ENCODE measurements at regions of chr18 and their contacts with region 1.

Region 1: DNA sequence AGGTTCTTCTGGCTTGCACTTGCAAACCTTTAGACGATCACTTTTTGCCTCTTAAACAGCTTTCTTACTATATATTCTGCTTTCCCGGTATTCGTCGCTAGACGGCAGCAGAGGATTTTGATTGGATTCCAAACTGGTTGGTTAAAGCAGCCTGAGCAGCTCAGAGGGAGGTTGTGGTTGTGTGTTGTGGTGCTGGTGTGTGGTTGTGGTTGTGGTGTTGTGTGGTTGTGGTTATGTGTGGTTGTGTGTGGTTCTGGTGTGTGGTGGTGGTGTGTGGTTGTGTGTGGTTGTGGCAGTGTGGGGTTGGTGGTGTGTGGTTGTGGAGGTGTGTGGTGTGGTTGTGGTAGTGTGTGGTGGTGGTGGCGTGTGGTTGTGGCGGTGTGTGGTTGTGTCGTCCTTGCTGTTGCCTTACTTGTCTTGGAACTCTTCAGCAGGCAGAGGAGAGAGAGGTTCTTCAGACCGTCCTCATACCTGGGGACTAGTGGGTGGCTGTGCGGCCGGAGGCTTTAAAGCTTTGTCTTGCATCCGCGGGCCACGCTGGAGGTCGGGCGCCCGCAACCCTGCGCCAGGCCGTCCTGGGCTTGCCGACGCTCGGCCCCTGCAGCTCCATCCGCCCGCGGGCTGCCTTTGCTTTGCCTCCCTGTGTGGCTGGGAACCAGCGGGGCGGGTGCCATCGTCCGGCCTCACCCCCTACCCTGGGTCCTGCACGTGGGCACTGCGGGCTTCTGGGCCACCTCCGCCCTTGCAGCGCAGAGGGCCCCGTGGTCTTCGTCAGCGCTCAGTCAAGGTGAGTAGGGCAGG is 190.8 kb downstream of the ARHGAP28 start:
- DNase-seq: peak; percentile 89
- ATAC-seq: peak; percentile 83
- H3K4me3 ChIP-seq: no peak overlapping the region
- H3K27ac ChIP-seq: no peak overlapping the region
- H3K4me1 ChIP-seq: no peaks in the 10 kb centered on the region
- H3K27me3 ChIP-seq: peaks cover 43% of the 10 kb centered on the region
- CTCF ChIP-seq: peak; percentile 94

Region 2: GRCh38 chr18:6521795-6522418 is 398.4 kb before region 1 on chr18:
- CTCF ChIA-PET with region 1: no interaction called
- POLR2A ChIA-PET with region 1: no interaction called
- intact Hi-C with region 1: no loop called
- DNase-seq: peak; percentile 85
- ATAC-seq: peak; percentile 84
- H3K4me3 ChIP-seq: no peak overlapping the region
- H3K27ac ChIP-seq: no peak overlapping the region
- H3K4me1 ChIP-seq: no peaks in the 10 kb centered on the region
- H3K27me3 ChIP-seq: no peaks in the 10 kb centered on the region
- CTCF ChIP-seq: peak; percentile 94

Region 3: DNA sequence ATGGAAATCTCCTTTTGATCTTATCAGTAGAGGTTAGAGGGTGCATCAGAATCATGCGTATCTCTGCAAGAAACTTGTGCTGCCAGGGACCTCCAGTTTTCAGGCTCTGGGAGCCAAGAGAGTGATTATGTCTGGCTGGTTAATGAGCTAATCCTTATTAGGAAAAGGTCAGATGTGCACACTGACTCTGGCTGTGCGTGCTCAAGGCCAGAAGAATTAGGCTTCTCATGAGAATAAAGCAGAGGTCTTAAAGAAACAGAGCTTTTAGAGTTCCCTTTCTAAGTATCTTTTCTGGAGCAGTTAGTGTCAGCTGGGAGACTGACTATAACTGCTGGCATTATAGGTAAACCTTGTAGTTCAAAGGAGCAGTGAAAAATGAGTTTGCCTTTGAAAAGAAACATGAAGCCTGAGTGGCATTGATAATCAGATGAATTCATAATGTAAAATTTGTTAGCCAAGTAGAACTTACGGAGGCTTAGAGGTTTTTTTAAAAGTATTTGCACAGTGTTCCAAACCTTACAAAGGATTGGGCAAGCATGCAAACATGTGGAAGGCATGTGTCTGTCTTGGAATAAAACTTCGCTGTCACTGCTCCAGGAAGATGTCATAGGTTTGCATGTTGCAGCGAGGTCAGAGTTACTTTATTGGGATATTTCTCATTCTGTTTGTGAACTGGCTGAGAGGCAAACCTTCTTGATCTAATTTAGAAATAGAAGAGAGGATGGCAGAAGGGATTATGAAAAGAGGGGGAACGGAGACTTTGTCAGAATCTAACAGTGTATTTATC is 39.1 kb before region 1 on chr18:
- CTCF ChIA-PET with region 1: no interaction called
- POLR2A ChIA-PET with region 1: no interaction called
- intact Hi-C with region 1: no loop called
- DNase-seq: no peak
- ATAC-seq: no peak
- H3K4me3 ChIP-seq: no peak overlapping the region
- H3K27ac ChIP-seq: no peak overlapping the region
- H3K4me1 ChIP-seq: no peaks in the 10 kb centered on the region
- H3K27me3 ChIP-seq: no peaks in the 10 kb centered on the region
- CTCF ChIP-seq: no peak

Region 4: GRCh38 chr18:7000484-7001096 is 80.3 kb after region 1 on chr18:
- CTCF ChIA-PET with region 1: interaction called, 8 read pairs
- POLR2A ChIA-PET with region 1: no interaction called
- intact Hi-C with region 1: loop called (anchors 1 kb)
- DNase-seq: peak; percentile 53
- ATAC-seq: peak; percentile 86
- H3K4me3 ChIP-seq: no peak overlapping the region
- H3K27ac ChIP-seq: no peak overlapping the region
- H3K4me1 ChIP-seq: no peaks in the 10 kb centered on the region
- H3K27me3 ChIP-seq: peaks cover 9% of the 10 kb centered on the region; the same call in 1 of the 2 replicates
- CTCF ChIP-seq: peak; percentile 81

Region 5: GRCh38 chr18:7147399-7147798 is 227.1 kb after region 1 on chr18:
- CTCF ChIA-PET with region 1: interaction called, 10 read pairs
- POLR2A ChIA-PET with region 1: no interaction called
- intact Hi-C with region 1: no loop called
- DNase-seq: no peak
- ATAC-seq: no peak
- H3K4me3 ChIP-seq: no peak overlapping the region
- H3K27ac ChIP-seq: no peak overlapping the region
- H3K4me1 ChIP-seq: no peaks in the 10 kb centered on the region
- H3K27me3 ChIP-seq: peaks cover 37% of the 10 kb centered on the region
- CTCF ChIP-seq: no peak

Region 6: GRCh38 chr18:7177116-7177744 is 256.9 kb after region 1 on chr18:
- CTCF ChIA-PET with region 1: interaction called, 7 read pairs
- POLR2A ChIA-PET with region 1: no interaction called
- intact Hi-C with region 1: loop called (anchors 1 kb)
- DNase-seq: peak; percentile 66
- ATAC-seq: peak; percentile 99
- H3K4me3 ChIP-seq: no peak overlapping the region
- H3K27ac ChIP-seq: no peak overlapping the region
- H3K4me1 ChIP-seq: no peaks in the 10 kb centered on the region
- H3K27me3 ChIP-seq: peaks cover 47% of the 10 kb centered on the region
- CTCF ChIP-seq: peak; percentile 83

Measured in PC-3 (cell line).